ENCODE measurements at regions of chr4 and their contacts with region 1.

Region 1: GRCh38 chr4:177250056-177250696 is 59.5 kb upstream of the NEIL3 start:
- H3K4me3 ChIP-seq: no peak overlapping the region
- H3K27ac ChIP-seq: no peak overlapping the region
- H3K4me1 ChIP-seq: no peaks in the 10 kb centered on the region
- CTCF ChIP-seq: peak; percentile 84

Region 2: DNA sequence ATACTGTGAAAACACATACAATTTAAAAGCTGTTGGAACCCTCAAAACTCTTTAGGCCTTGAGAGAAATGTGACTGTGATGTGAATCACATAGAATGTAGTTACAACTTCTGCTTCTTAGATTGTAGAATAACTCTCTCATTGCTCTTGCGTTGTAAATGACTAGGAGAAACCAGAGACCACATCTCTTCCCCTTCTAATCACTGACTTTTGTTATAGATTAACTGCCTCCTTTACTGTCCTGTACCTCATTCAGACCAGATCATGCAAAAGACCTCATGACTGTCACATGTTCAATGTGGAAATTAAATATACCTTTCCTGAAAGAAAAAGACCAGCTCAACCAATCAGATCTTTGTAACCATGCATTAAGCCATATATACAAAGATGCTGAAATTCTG is 16.3 kb after region 1 on chr4:
- CTCF ChIA-PET with region 1: interaction called, 10 read pairs
- POLR2A ChIA-PET with region 1: no interaction called
- H3K4me3 ChIP-seq: no peak overlapping the region
- H3K27ac ChIP-seq: no peak overlapping the region
- H3K4me1 ChIP-seq: no peaks in the 10 kb centered on the region
- CTCF ChIP-seq: no peak

Region 3: GRCh38 chr4:177339477-177340374 is 89.5 kb after region 1 on chr4:
- CTCF ChIA-PET with region 1: interaction called, 11 read pairs
- POLR2A ChIA-PET with region 1: no interaction called
- H3K4me3 ChIP-seq: no peak overlapping the region
- H3K27ac ChIP-seq: no peak overlapping the region
- H3K4me1 ChIP-seq: no peaks in the 10 kb centered on the region
- CTCF ChIP-seq: no peak

Region 4: GRCh38 chr4:177484613-177485021 is 234.4 kb after region 1 on chr4:
- CTCF ChIA-PET with region 1: no interaction called
- POLR2A ChIA-PET with region 1: no interaction called
- H3K4me3 ChIP-seq: no peak overlapping the region
- H3K27ac ChIP-seq: no peak overlapping the region
- H3K4me1 ChIP-seq: no peaks in the 10 kb centered on the region
- CTCF ChIP-seq: no peak